ENCODE measurements at regions of chr3 and their contacts with region 1.

Region 1: DNA sequence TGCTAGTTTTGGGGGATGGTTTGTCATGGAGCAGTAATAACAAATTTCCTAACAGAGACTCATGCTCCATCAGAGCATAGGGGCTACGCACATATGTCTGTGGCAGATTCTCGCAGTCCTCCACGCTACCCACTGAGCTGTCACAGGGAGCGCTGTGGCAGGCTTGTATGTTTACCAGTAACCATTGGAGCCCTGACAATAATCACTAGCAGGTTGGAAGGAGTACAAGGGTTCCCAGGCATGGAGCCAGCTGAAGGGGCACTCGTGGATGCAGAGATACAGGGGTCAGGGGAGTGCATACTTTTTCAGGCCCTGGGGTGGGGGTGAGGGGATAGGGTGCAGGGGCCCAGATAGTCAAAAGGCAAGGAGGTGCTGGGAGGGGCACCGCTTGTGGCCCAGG is 7.9 kb upstream of the GP9 start:
- DNase-seq: no peak
- H3K4me3 ChIP-seq: no peak overlapping the region
- H3K4me3 Mint-ChIP-seq: no peak overlapping the region
- H3K27ac ChIP-seq: no peak overlapping the region
- H3K27ac Mint-ChIP-seq: peak overlapping the region in 3 of 7 donors; percentile 33 to 80 (median 52)
- H3K4me1 ChIP-seq: peaks cover 5% of the 10 kb centered on the region
- H3K4me1 Mint-ChIP-seq: peaks cover 6 to 8% (median 7%) of the 10 kb centered on the region in 4 donors
- H3K27me3 ChIP-seq: no peaks in the 10 kb centered on the region
- H3K27me3 Mint-ChIP-seq: no peaks in the 10 kb centered on the region

Region 2: DNA sequence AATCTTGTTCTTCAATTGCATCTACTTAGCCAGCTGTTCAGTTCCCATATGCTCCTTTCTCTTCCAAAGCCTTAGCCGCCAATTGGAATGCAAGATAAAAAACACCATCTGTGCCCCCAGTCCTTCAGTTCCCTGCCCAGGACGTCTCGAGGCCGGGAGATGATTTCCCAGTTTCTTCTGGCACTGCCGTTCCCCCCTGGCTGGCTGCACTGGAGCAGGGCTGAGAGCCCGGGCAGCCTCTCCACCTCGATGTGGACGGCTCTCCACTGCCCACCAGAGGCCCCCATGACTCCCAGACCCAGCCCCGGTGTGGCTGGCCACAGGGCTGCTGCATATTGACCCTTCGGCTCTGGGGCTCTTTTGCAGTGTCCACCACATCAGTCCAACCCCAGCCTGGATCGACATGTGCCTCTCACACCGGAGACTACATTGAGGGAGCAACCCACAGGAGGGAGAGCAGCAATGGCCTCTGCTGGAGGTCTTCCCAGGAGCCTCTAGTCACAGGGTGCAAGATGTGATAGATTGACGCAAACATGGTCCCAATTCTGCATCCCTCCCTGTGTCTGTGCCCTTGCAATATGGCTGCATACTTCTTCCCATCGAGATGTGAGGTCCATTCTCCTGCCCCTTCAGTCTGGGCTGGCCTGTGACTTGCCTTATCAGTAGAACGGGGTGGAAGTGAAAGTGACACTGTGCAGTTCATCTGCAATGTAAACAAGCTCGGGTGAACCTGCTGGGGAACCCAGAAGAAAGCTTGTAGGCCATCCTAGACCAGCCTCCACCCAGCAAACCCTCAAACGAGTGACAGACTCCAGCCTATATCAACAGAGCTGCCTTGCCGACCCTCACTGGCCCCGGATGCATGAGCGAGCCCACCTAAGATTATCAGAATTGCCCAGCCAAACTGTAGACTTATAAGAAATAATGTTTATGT is 1712.5 kb before region 1 on chr3:
- CTCF ChIA-PET with region 1: no interaction called
- POLR2A ChIA-PET with region 1: no interaction called
- intact Hi-C with region 1: no loop called
- DNase-seq: no peak
- H3K4me3 ChIP-seq: no peak overlapping the region
- H3K4me3 Mint-ChIP-seq: no peak overlapping the region
- H3K27ac ChIP-seq: no peak overlapping the region
- H3K27ac Mint-ChIP-seq: no peak overlapping the region
- H3K4me1 ChIP-seq: no peaks in the 10 kb centered on the region
- H3K4me1 Mint-ChIP-seq: no peaks in the 10 kb centered on the region
- H3K27me3 ChIP-seq: no peaks in the 10 kb centered on the region
- H3K27me3 Mint-ChIP-seq: peaks cover 18 to 27% of the 10 kb centered on the region in 2 donors

Region 3: DNA sequence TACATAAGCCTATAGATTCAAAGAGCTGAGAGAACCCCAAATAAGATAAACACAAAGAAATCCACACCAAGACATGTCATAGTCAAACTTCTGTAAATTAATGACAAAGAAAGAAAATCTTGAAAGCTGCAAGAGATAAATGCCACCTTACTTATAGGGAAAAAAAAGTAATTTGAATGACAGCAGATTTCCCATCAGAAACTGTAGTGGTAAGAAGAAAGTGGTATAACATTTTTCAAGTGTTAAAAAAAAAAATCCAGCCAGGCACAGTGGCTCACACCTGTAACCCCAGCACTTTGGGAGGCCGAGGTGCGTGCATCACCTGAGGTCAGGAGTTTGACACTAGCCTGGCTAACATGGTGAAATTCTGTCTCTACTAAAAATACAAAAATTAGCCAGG is 96.2 kb before region 1 on chr3:
- CTCF ChIA-PET with region 1: no interaction called
- POLR2A ChIA-PET with region 1: no interaction called
- intact Hi-C with region 1: no loop called
- DNase-seq: no peak
- H3K4me3 ChIP-seq: no peak overlapping the region
- H3K4me3 Mint-ChIP-seq: no peak overlapping the region
- H3K27ac ChIP-seq: no peak overlapping the region
- H3K27ac Mint-ChIP-seq: no peak overlapping the region
- H3K4me1 ChIP-seq: no peaks in the 10 kb centered on the region
- H3K4me1 Mint-ChIP-seq: no peaks in the 10 kb centered on the region
- H3K27me3 ChIP-seq: no peaks in the 10 kb centered on the region
- H3K27me3 Mint-ChIP-seq: peaks cover 1 to 4% of the 10 kb centered on the region in 2 donors

Region 4: DNA sequence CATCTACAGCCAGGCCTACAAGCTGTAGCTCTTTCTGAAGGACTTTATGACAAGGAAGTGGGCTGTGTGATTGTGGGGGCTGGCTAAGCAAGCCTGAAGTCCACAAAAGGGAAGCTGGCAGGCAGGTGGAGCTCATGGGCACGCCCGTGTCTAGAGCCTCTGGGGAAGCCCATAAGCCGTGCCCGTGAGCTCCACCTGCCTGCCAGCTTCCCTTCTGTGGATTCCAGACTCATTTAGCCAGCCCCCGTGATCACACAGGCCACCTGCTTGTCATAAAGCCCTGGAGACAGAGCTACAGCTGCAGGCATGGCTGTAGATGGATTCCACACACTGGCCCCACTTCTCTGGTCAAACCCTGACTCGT is 36.3 kb before region 1 on chr3:
- CTCF ChIA-PET with region 1: interaction called, 58 read pairs
- POLR2A ChIA-PET with region 1: interaction called, 4 read pairs
- intact Hi-C with region 1: no loop called
- DNase-seq: peak; percentile 54 to 74 (median 59)
- H3K4me3 ChIP-seq: peak overlapping the region; percentile 41 to 54
- H3K4me3 Mint-ChIP-seq: peak overlapping the region; percentile 54 to 89 (median 83)
- H3K27ac ChIP-seq: peak overlapping the region; percentile 64
- H3K27ac Mint-ChIP-seq: peak overlapping the region; percentile 85 to 99 (median 94)
- H3K4me1 ChIP-seq: peaks cover 36% of the 10 kb centered on the region
- H3K4me1 Mint-ChIP-seq: peaks cover 32 to 54% (median 44%) of the 10 kb centered on the region in 4 donors
- H3K27me3 ChIP-seq: no peaks in the 10 kb centered on the region
- H3K27me3 Mint-ChIP-seq: no peaks in the 10 kb centered on the region

Region 5: GRCh38 chr3:129039271-129040038 is 13.2 kb before region 1 on chr3:
- CTCF ChIA-PET with region 1: interaction called, 32 read pairs
- POLR2A ChIA-PET with region 1: interaction called, 4 read pairs
- intact Hi-C with region 1: no loop called
- DNase-seq: no peak
- H3K4me3 ChIP-seq: no peak overlapping the region
- H3K4me3 Mint-ChIP-seq: no peak overlapping the region
- H3K27ac ChIP-seq: no peak overlapping the region
- H3K27ac Mint-ChIP-seq: peak overlapping the region in 1 of 7 donors; percentile 12
- H3K4me1 ChIP-seq: peaks cover 9% of the 10 kb centered on the region
- H3K4me1 Mint-ChIP-seq: peaks cover 3 to 21% (median 10%) of the 10 kb centered on the region in 4 donors
- H3K27me3 ChIP-seq: peaks cover 7% of the 10 kb centered on the region
- H3K27me3 Mint-ChIP-seq: peaks cover 11 to 17% of the 10 kb centered on the region in 2 donors

Region 6: GRCh38 chr3:129160891-129161859 is 108.5 kb after region 1 on chr3 and contains the start of gene ISY1:
- CTCF ChIA-PET with region 1: interaction called, 7 read pairs
- POLR2A ChIA-PET with region 1: interaction called, 8 read pairs
- intact Hi-C with region 1: loop called (anchors 1 kb)
- DNase-seq: peak; percentile 90 to 93 (median 92)
- H3K4me3 ChIP-seq: peak within 1 kb of the TSS; percentile 75 to 94
- H3K4me3 Mint-ChIP-seq: peak within 1 kb of the TSS; percentile 96 to 100 (median 97)
- H3K27ac ChIP-seq: peak within 1 kb of the TSS; percentile 97
- H3K27ac Mint-ChIP-seq: peak within 1 kb of the TSS; percentile 98 to 100 (median 99)
- H3K4me1 ChIP-seq: peaks cover 23% of the 10 kb centered on the region
- H3K4me1 Mint-ChIP-seq: peaks cover 24 to 59% (median 37%) of the 10 kb centered on the region in 4 donors
- H3K27me3 ChIP-seq: no peaks in the 10 kb centered on the region
- H3K27me3 Mint-ChIP-seq: no peaks in the 10 kb centered on the region
- total RNA-seq, gene ISY1: 29.5 to 34.3 TPM

Region 7: GRCh38 chr3:129238945-129239706 is 186.5 kb after region 1 on chr3:
- CTCF ChIA-PET with region 1: interaction called, 233 read pairs
- POLR2A ChIA-PET with region 1: no interaction called
- intact Hi-C with region 1: no loop called
- DNase-seq: peak in 1 of 5 donors; percentile 17
- H3K4me3 ChIP-seq: no peak overlapping the region
- H3K4me3 Mint-ChIP-seq: peak overlapping the region; percentile 33 to 78 (median 64)
- H3K27ac ChIP-seq: no peak overlapping the region
- H3K27ac Mint-ChIP-seq: peak overlapping the region in 5 of 7 donors; percentile 17 to 91 (median 76)
- H3K4me1 ChIP-seq: peaks cover 28% of the 10 kb centered on the region
- H3K4me1 Mint-ChIP-seq: peaks cover 7 to 18% (median 13%) of the 10 kb centered on the region in 4 donors
- H3K27me3 ChIP-seq: no peaks in the 10 kb centered on the region
- H3K27me3 Mint-ChIP-seq: no peaks in the 10 kb centered on the region